ENCODE measurements at regions of chr1 and their contacts with region 1.

Region 1: GRCh38 chr1:18217398-18218043 is 109.9 kb downstream of the IGSF21 start:
- H3K4me3 Mint-ChIP-seq: no peak overlapping the region
- H3K27ac Mint-ChIP-seq: no peak overlapping the region
- H3K4me1 Mint-ChIP-seq: no peaks in the 10 kb centered on the region
- H3K27me3 Mint-ChIP-seq: peaks cover 11% of the 10 kb centered on the region

Region 2: GRCh38 chr1:17986156-17986555 is 231.4 kb before region 1 on chr1:
- intact Hi-C with region 1: loop called (anchors 5 kb)
- H3K4me3 Mint-ChIP-seq: no peak overlapping the region
- H3K27ac Mint-ChIP-seq: no peak overlapping the region
- H3K4me1 Mint-ChIP-seq: no peaks in the 10 kb centered on the region
- H3K27me3 Mint-ChIP-seq: peaks cover 4% of the 10 kb centered on the region

Region 3: DNA sequence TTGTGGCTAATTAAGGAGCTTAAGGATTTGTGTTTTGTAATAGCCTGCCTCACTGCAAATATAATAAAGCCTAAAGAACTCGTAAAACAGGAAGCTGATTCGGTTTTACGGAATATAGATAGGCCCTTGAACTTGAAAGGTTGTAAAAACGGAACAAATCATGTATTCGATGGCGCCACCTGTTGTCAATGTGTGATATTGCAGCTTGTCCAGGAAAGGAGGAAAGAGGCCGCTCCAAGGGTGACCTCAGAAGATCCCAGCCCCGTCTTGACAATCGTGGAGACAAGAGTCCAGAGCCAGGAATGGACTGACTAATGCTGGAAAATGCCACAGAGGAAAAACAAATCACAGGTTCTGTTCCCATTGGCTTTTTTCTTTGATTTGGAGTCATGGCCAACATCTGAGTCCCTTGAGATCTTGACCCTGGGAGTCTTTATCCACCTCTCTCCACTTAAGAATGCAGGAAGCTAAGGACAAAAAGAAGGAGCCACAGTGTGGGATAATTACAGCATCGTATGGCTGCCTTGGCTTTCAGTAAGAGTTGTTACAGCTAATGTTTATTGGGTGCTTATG is 116.9 kb before region 1 on chr1:
- intact Hi-C with region 1: loop called (anchors 10 kb)
- H3K4me3 Mint-ChIP-seq: no peak overlapping the region
- H3K27ac Mint-ChIP-seq: no peak overlapping the region
- H3K4me1 Mint-ChIP-seq: no peaks in the 10 kb centered on the region
- H3K27me3 Mint-ChIP-seq: peaks cover 30% of the 10 kb centered on the region

Measured in dendritic cell treated with granulocyte-macrophage colony-stimulating factor and Interleukin-4, amounts not matched to agents 40 ng/mL and 50 ng/mL, for 4 days (primary cell).